ENCODE measurements at regions of chr3 and their contacts with region 1.

Region 1: DNA sequence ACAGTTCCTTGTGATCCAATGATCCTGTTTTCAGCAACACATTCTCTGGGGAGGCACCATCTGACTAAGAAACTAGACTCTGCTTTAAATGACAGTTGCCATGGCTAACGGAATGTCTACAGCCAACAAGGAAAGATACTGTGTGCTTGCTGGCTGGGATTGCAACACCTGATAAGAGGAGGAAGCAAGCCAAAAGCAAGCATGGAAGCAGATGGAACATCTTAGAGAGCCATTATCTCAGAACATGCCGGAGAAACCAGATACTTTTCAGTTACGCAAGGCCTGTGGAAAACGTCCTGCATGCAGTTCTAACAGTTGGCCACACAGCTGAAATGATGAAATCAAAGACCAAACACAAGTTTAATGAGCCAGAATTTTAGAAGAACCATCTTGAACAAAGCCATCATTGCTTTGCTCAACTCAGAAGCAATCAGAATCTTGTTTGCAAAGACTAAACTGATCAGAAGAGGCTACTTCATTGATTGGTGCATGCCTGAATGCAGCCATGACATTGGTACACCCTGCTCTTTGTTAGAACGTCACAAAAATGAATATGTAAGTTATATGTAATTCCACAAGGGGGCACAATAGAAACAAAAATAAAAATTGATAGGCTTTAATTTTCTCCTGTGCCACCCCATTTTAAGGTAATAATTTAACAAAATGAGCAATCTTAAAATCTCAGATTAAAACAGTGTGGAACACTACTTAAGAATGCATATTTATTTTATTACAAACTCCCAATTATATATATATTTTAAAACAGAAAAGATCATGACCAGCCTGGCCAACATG is 50.8 kb downstream of the GXYLT2 start:
- DNase-seq: peak; percentile 59
- H3K4me3 ChIP-seq: no peak overlapping the region
- H3K27ac ChIP-seq: no peak overlapping the region
- H3K4me1 ChIP-seq: no peaks in the 10 kb centered on the region
- CTCF ChIP-seq: peak; percentile 81

Region 2: DNA sequence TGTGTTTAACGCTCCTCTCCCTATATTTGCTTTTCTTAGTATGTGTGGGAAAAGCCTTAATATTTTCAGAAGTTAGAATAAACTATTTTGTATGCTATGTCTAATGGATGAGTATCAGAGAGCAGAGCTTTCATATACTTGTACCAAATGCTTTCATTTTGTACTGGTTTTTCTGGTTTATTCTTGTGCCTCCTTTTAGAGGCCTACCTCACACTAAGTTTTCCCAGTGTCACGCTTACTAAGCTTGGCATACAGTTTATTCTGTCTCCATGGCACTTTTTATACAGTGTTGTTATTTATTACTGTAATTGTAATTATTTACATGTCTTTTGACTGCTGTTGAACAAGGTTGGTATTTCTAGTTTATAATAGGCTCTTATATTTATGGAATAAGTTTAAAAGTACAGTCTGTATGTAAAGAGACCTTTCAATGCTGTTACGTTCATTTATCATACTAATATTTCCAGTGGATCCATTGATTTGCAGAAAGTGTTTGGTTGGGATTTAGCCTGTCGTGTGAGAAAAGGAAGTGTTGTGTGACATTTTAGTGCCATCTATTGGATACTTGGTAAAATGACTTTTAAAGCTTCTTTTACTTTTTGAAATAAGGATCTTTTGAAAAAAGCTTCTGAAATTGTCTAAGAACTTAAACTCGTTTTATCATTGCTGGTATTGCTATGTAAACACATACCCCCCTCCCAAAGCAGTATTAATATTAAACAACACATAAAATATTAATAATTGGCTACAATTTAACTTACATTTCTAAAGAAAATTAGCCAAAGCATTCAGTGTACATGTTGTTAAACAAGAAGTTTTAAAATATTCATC is 117.6 kb after region 1 on chr3:
- CTCF ChIA-PET with region 1: no interaction called
- POLR2A ChIA-PET with region 1: interaction called, 3 read pairs
- intact Hi-C with region 1: loop called (anchors 1 kb)
- DNase-seq: peak; percentile 16
- H3K4me3 ChIP-seq: no peak overlapping the region
- H3K27ac ChIP-seq: no peak overlapping the region
- H3K4me1 ChIP-seq: no peaks in the 10 kb centered on the region
- CTCF ChIP-seq: peak; percentile 81

Measured in OCI-LY7 (cell line).